ENCODE measurements at regions of chr10 and their contacts with region 1.

Region 1: DNA sequence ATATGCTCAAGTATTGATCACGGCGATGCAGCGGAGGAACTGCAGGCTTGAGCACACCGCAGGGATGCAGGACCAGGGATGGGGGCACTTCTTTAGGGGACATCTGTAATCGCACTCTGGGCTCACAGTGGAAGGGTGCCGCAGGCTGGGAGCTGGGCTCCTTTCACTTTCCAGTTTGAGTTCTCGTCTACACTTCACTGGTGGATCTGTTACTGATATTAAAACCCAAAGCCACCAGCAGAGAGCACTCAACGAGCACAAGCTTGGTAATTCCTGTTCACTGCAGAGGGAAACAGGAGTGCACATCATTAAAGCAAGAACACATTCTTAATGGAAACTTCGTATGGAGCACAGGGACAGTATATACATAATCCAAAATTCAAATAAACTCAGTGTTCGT is 91.3 kb downstream of the PARD3 start:
- DNase-seq: peak; percentile 69
- H3K4me3 Mint-ChIP-seq: peak overlapping the region; percentile 51
- H3K27ac Mint-ChIP-seq: peak overlapping the region; percentile 10
- H3K4me1 Mint-ChIP-seq: peaks cover 41% of the 10 kb centered on the region
- H3K27me3 Mint-ChIP-seq: no peaks in the 10 kb centered on the region
- CTCF ChIP-seq: peak; percentile 53

Region 2: GRCh38 chr10:34507217-34507616 is 216.5 kb before region 1 on chr10:
- CTCF ChIA-PET with region 1: no interaction called
- POLR2A ChIA-PET with region 1: no interaction called
- intact Hi-C with region 1: no loop called
- DNase-seq: no peak
- H3K4me3 Mint-ChIP-seq: no peak overlapping the region
- H3K27ac Mint-ChIP-seq: no peak overlapping the region
- H3K4me1 Mint-ChIP-seq: peaks cover 18% of the 10 kb centered on the region
- H3K27me3 Mint-ChIP-seq: no peaks in the 10 kb centered on the region
- CTCF ChIP-seq: no peak

Region 3: GRCh38 chr10:34547291-34547690 is 176.5 kb before region 1 on chr10:
- CTCF ChIA-PET with region 1: no interaction called
- POLR2A ChIA-PET with region 1: no interaction called
- intact Hi-C with region 1: no loop called
- DNase-seq: no peak
- H3K4me3 Mint-ChIP-seq: no peak overlapping the region
- H3K27ac Mint-ChIP-seq: no peak overlapping the region
- H3K4me1 Mint-ChIP-seq: peaks cover 15% of the 10 kb centered on the region
- H3K27me3 Mint-ChIP-seq: no peaks in the 10 kb centered on the region
- CTCF ChIP-seq: no peak

Region 4: DNA sequence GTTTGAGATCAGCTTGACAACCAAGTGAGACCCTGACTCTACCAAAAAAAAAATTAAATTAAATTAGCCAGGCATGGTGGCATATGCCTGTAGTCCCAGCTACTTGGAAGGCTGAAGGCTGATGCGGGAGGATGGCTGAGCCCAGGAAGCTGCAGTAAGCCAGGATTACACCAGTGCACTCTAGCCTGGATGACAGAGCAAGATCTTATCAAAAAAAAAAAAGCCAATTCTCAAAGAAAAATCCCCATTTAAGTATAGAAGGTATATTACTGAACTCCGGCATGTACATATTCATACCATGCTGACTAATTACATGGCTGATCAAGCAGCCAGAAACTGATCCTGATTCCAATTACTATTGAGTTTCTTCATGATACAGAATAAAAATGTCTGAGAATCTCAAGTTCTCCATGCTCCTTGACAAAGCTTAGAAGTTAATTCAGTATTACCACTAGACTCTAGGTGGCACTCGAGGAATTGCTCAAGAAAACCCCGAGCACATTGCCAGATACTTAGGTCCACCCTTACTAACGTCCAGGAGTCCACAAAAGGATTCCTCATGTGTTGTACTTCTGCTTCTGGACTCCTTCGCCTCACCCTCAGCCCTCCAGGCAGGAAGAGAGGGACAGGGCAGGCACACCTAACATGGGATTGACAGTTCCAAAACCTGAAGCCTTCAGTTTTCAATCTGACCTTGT is 57.6 kb before region 1 on chr10:
- CTCF ChIA-PET with region 1: interaction called, 9 read pairs
- POLR2A ChIA-PET with region 1: interaction called, 4 read pairs
- intact Hi-C with region 1: loop called (anchors 1 kb)
- DNase-seq: peak; percentile 90
- H3K4me3 Mint-ChIP-seq: peak overlapping the region; percentile 57
- H3K27ac Mint-ChIP-seq: peak overlapping the region; percentile 87
- H3K4me1 Mint-ChIP-seq: peaks cover 24% of the 10 kb centered on the region
- H3K27me3 Mint-ChIP-seq: no peaks in the 10 kb centered on the region
- CTCF ChIP-seq: peak; percentile 73

Region 5: DNA sequence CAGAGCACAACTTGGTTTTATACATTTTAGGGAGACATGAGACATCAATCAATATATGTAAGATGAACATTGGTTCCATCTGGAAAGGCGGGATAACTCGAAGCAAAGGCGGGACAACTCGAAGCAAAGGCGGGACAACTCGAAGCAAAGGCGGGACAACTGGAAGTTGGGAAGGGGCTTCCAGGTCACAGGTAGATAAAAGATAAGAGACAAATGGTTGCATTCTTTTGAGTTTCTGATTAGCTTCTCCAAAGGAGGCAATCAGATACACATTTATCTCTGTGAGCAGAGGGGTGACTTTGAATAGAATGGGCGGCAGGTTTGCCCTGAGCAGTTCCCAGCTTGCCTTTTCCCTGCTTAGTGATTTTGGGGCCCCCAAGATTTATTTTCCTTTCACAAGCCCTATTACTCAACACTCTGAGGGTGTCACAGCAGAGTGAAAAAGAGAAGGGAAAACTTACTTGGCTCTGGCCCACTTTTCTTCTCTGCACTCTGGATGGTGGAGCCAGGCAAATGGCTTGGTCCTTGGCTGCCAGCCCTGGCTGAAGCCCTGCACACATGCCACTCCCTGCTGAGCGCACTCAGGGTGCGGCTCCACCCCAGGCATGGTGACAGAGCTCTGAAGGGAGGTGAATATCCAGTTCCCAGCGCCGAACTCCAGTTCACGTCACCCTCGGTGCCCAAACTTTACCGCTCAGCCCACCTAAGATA is 44.7 kb after region 1 on chr10:
- CTCF ChIA-PET with region 1: interaction called, 4 read pairs
- POLR2A ChIA-PET with region 1: interaction called, 13 read pairs
- intact Hi-C with region 1: no loop called
- DNase-seq: peak; percentile 95
- H3K4me3 Mint-ChIP-seq: peak overlapping the region; percentile 67
- H3K27ac Mint-ChIP-seq: peak overlapping the region; percentile 92
- H3K4me1 Mint-ChIP-seq: peaks cover 60% of the 10 kb centered on the region
- H3K27me3 Mint-ChIP-seq: no peaks in the 10 kb centered on the region
- CTCF ChIP-seq: no peak

Region 6: GRCh38 chr10:34960983-34961382 is 237.2 kb after region 1 on chr10:
- CTCF ChIA-PET with region 1: interaction called, 9 read pairs
- POLR2A ChIA-PET with region 1: no interaction called
- intact Hi-C with region 1: loop called (anchors 1 kb)
- DNase-seq: no peak
- H3K4me3 Mint-ChIP-seq: no peak overlapping the region
- H3K27ac Mint-ChIP-seq: no peak overlapping the region
- H3K4me1 Mint-ChIP-seq: no peaks in the 10 kb centered on the region
- H3K27me3 Mint-ChIP-seq: no peaks in the 10 kb centered on the region
- CTCF ChIP-seq: peak; percentile 33